Esophagus squamous epithelium (tissue), 5 donors: ENCODE measurements at regions of chr7 and their contacts with region 1.

Region 1: DNA sequence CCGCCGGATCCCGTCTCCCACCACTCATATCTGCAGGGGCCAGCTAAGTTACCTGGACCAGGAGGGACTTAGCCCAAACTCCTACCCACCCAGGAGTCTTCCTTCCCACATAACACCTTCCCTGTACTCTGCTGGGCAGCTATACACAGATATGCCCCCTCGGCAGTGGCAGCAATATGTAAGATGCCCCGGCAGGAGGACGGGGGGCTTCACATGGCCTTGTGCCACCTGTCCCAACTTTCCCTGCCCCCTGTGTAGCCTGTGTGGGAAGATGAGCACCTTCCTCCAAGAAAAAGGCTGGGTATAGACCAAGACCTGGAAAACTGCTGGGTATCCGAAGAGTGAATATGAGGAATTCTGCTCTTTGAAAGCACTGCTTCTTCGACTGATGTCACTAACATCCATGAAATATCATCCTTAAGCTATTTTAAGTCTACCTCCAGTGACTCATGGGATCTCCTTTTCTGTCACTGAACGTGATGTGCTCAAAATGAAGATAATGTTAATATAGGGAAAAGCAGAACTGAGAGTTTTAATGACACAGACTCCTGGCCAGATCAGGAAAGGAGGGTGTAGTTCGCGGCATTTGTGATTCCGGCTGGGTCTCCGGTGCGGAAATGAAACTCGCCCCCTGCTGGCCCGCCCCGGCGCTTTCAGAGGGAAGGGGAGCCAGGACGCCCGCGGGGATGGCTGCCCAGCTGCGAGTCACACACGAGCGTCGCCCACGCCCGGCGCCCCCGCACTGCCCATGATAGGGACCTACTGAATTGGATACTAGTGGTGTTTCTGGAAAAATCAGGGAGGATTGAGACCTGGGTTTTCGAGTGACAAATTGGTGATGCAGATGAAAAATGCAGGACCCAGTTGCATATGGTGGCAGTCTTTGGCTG is 256.9 kb upstream of the NFE2L3 start:
- DNase-seq: no peak
- H3K4me3 ChIP-seq: peak overlapping the region in 3 of 4 donors; percentile 16 to 42 (median 18)
- H3K27ac ChIP-seq: peak overlapping the region in 2 of 4 donors; percentile 6 to 71
- H3K4me1 ChIP-seq: peaks cover 10 to 25% (median 13%) of the 10 kb centered on the region in 3 donors
- H3K27me3 ChIP-seq: peaks cover 0 to 40% (median 0%) of the 10 kb centered on the region in 4 donors
- CTCF ChIP-seq: peak; percentile 45 to 79 (median 69)
- POLR2A ChIP-seq: no peak

Region 2: DNA sequence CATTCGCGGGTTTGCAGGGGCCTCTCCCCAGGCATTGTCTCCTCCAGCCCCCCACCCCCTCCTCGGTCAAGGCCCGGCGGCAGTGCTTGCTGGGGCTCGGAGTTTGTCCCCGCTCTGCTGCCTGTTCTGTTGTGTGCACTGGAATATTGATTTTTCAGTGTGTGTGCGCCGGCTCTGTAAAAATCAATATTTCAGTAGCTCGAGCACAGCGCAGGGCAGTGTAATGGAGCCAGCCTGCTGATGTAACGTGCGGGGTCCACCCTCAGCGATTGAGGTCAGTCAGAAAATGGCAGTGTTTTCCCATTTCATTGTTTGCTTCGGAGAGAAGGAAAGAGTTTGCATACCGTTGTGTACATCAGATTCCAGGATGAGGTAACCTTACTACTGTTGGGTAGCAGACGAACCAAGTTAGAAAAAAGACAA is 57.5 kb after region 1 on chr7:
- intact Hi-C with region 1: no loop called
- DNase-seq: no peak
- H3K4me3 ChIP-seq: no peak overlapping the region
- H3K27ac ChIP-seq: no peak overlapping the region
- H3K4me1 ChIP-seq: peaks cover 7 to 50% (median 20%) of the 10 kb centered on the region in 3 donors
- H3K27me3 ChIP-seq: peaks cover 0 to 36% (median 0%) of the 10 kb centered on the region in 4 donors
- CTCF ChIP-seq: no peak
- POLR2A ChIP-seq: no peak

Region 3: GRCh38 chr7:25968205-25968993 is 73.3 kb after region 1 on chr7:
- intact Hi-C with region 1: no loop called
- DNase-seq: no peak
- H3K4me3 ChIP-seq: no peak overlapping the region
- H3K27ac ChIP-seq: peak overlapping the region in 1 of 4 donors; percentile 62
- H3K4me1 ChIP-seq: peaks cover 0 to 19% (median 4%) of the 10 kb centered on the region in 3 donors
- H3K27me3 ChIP-seq: peaks cover 0 to 66% (median 0%) of the 10 kb centered on the region in 4 donors
- CTCF ChIP-seq: no peak
- POLR2A ChIP-seq: no peak

Region 4: GRCh38 chr7:26061688-26062150 is 166.6 kb after region 1 on chr7:
- intact Hi-C with region 1: loop called (anchors 5 kb)
- DNase-seq: no peak
- H3K4me3 ChIP-seq: no peak overlapping the region
- H3K27ac ChIP-seq: no peak overlapping the region
- H3K4me1 ChIP-seq: peaks cover 0 to 15% (median 5%) of the 10 kb centered on the region in 3 donors
- H3K27me3 ChIP-seq: peaks cover 0 to 30% (median 0%) of the 10 kb centered on the region in 4 donors
- CTCF ChIP-seq: peak; percentile 63 to 84 (median 79)
- POLR2A ChIP-seq: no peak

Region 5: DNA sequence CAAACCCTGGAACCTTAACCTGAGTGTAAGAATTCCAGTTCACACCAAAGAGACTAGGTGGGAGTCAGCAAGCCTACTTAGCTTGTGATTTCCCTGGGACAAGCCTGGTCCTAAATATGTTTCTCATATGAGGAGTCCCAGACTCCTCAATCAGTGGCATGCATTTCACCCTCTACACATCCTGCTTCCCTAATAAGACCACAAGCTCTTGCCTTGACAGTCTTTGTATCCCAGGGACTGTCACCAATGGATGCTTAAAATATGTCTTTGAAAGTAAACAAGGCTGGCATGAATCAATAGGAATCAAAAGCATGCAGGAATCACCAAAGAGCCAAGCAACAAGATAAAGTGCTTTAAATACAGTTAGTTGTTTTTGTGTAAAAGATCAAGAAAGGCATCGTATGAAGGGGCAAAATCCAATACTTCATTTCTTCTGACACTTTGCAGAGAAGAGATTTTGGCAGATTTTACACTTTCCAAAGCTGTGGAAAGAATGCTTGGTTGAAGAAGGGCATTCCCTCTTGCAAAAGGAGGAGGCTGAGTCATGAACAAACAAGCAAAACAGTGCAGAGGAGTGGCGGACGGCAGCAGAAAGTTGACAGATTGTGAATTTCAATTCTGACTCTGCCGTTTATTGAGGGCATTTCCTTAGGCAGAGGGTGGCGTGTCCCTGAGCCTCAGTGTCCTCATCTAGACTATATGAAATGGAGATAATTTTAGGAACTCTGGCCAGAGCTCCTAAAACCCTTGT is 248.3 kb after region 1 on chr7:
- intact Hi-C with region 1: no loop called
- DNase-seq: no peak
- H3K4me3 ChIP-seq: no peak overlapping the region
- H3K27ac ChIP-seq: peak overlapping the region in 1 of 4 donors; percentile 29
- H3K4me1 ChIP-seq: peaks cover 0 to 38% (median 0%) of the 10 kb centered on the region in 3 donors
- H3K27me3 ChIP-seq: no peaks in the 10 kb centered on the region
- CTCF ChIP-seq: no peak
- POLR2A ChIP-seq: no peak

Region 6: DNA sequence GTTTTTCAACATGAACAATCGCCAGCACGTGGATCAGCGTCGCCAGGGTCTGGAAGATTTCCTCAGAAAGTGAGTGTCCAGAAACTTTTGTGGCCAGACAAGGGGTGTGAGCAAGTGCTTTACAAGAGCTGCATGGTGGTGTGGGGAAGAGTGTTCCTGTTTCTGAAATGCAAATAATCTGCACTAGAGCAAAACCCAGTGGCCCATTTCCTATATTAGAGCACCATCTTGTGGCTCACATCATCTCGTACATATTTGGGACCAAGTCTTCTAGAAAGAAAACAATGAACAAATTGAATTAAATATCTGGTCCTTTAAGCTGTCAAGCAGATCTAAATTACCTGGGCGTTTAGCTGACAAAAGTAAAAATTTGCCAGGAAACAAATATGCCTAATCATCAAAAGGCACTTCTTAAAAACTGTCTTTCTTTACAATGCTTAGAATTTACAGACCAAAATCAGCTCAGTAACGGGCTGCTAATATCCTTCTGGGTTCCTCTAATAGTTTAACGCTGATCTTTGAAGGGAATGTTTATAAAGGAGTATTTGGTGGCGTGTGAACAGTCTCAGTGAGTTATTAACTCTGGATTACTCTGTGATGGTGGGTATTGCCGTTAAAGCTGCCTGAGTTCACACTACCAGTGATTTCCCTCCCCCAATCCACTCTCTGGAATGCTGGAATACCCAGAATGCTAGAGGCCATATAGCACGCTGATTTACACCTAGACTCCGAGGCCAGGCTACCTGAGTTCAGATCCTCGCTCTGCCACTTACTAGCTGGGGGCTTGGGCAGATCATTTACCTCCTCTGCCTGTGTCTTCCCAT is 470.1 kb after region 1 on chr7:
- intact Hi-C with region 1: loop called (anchors 5 kb)
- DNase-seq: no peak
- H3K4me3 ChIP-seq: no peak overlapping the region
- H3K27ac ChIP-seq: no peak overlapping the region
- H3K4me1 ChIP-seq: peaks cover 0 to 7% (median 0%) of the 10 kb centered on the region in 3 donors
- H3K27me3 ChIP-seq: peaks cover 0 to 16% (median 0%) of the 10 kb centered on the region in 4 donors
- CTCF ChIP-seq: peak; percentile 47 to 90 (median 76)
- POLR2A ChIP-seq: no peak

Region 7: DNA sequence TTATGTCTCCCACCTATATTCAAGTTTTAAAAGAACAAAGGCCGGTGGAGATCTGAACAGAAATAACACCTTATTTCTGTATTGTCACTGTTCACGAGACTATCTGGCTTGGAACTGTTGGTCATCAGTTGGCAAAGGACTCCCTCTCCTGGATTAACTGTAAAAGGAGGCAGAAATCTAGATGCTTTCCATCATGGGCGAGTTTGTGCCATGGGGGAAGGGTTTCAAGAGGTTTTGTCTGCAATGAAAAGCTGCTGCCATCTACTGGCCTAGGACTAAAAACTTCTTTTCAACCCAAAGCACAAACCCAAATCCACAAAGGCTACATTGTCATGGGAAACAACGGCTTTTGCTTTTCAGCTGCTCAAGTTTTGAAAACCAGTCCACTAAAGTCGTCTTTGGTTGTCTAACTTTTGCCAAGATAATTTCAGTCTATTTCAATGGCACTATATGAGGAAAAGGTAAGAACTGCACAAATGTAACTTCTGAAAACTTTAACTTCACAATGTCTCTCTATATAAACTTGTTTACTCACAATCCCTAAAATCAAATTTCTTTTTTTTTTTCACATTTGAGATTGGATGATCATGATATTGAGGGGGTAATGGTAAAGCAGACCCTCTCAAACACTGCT is 772.5 kb after region 1 on chr7:
- intact Hi-C with region 1: loop called (anchors 10 kb)
- DNase-seq: no peak
- H3K4me3 ChIP-seq: no peak overlapping the region
- H3K27ac ChIP-seq: no peak overlapping the region
- H3K4me1 ChIP-seq: peaks cover 0 to 10% (median 0%) of the 10 kb centered on the region in 3 donors
- H3K27me3 ChIP-seq: peaks cover 0 to 10% (median 0%) of the 10 kb centered on the region in 4 donors
- CTCF ChIP-seq: peak; percentile 32 to 88 (median 71)
- POLR2A ChIP-seq: no peak